AG04450 (cell line): ENCODE measurements at regions of chr5 and their contacts with region 1.

Region 1: GRCh38 chr5:149852641-149853330 is 91.8 kb downstream of the PDE6A start:
- DNase-seq: peak; percentile 46
- H3K4me3 ChIP-seq: no peak overlapping the region
- H3K27ac ChIP-seq: no peak overlapping the region
- H3K27me3 ChIP-seq: peaks cover 19% of the 10 kb centered on the region
- CTCF ChIP-seq: peak; percentile 95

Region 2: DNA sequence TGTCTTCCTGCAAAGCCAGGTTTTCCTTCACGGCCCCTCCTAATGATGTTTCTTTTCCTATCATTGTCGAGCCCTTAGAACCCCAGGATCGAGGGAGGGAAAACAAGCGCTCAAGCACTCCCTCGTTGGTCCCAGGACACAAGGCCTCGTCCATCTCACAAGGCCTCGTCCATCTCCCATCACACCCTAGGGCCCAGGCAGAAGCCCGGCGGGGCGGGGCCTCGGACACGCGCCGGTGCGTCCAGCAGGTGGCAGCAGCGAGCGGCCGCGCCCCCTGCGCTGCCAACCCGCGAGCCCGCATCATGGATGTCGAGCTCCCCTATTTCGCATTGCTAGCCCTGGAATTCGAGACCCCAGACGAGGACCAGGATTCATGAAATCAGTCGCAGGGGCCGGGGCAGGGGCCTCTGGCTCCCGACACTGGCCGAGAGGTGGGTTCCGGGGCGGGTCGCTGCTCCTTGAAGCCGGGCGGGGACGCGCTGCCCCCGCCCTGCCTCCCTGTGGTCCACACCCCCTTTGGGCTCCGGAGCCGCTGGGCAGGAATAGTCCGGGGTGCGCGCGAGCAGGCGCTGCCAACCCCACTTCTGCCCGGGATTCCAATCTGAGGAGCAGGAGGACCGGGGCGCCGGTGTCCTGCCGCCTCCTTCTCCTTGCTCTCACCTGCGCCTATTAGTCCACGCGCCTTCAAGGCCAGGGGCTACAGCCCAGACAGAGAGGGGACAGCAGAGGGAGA is 711.4 kb before region 1 on chr5 and contains the start of gene ABLIM3:
- CTCF ChIA-PET with region 1: no interaction called
- POLR2A ChIA-PET with region 1: no interaction called
- DNase-seq: no peak
- H3K4me3 ChIP-seq: peak within 1 kb of the TSS; percentile 94
- H3K27ac ChIP-seq: peak within 1 kb of the TSS; percentile 69
- H3K27me3 ChIP-seq: no peaks in the 10 kb centered on the region
- CTCF ChIP-seq: peak; percentile 76
- polyA plus RNA-seq, gene ABLIM3: 52.6 and 60.6 TPM in 2 replicates

Region 3: GRCh38 chr5:149828161-149828884 is 24.5 kb before region 1 on chr5:
- CTCF ChIA-PET with region 1: interaction called, 325 read pairs
- POLR2A ChIA-PET with region 1: no interaction called
- DNase-seq: peak; percentile 85
- H3K4me3 ChIP-seq: no peak overlapping the region
- H3K27ac ChIP-seq: no peak overlapping the region
- H3K27me3 ChIP-seq: no peaks in the 10 kb centered on the region
- CTCF ChIP-seq: peak; percentile 89

Region 4: DNA sequence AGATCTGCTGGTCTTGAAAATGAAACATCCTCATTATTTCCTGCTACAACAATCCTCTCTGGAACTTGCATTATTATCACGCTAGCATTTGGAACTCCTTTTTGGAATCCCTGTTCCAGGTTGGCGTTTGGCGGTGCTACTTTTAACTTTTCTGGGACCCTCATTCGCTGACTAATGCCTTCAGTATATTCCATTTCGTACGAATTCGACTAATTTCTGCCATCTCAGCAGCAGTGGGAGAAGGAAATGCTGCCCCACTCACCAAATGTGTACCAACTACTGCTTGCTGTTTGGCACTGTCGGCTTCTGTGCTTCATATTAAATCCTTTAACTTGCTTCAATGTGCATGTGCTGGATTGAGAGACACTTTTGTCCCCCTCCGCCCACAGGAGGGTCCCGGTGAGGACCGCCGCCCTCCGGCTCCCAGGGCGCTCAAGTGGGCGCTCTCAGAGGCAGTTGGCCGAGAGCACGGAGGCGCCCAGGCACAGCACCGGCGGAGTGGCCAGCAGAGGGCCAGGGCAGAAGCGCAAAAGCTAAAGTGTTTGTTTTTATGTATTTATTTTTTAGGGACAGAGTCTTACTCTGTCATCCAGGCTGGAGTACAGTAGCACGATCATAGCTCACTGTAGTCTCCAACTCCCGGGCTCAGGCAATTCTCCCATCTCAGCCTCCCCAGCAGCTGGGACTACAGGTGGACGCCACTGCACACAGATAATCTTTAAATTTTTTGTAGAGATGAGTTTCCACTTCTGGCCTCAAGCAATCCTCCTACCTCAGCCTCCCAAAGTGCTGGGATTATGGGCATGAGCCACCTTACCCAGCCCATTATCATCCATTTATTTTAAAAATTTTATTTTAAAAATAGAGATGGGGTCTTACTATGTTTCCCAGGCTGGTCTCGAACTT is 79.9 kb after region 1 on chr5:
- CTCF ChIA-PET with region 1: interaction called, 19 read pairs
- POLR2A ChIA-PET with region 1: no interaction called
- DNase-seq: no peak
- H3K4me3 ChIP-seq: no peak overlapping the region
- H3K27ac ChIP-seq: no peak overlapping the region
- H3K27me3 ChIP-seq: peaks cover 3% of the 10 kb centered on the region
- CTCF ChIP-seq: peak; percentile 45

Region 5: GRCh38 chr5:149979896-149980295 is 127.1 kb after region 1 on chr5:
- CTCF ChIA-PET with region 1: interaction called, 13 read pairs
- POLR2A ChIA-PET with region 1: no interaction called
- DNase-seq: no peak
- H3K4me3 ChIP-seq: no peak overlapping the region
- H3K27ac ChIP-seq: no peak overlapping the region
- H3K27me3 ChIP-seq: no peaks in the 10 kb centered on the region
- CTCF ChIP-seq: no peak

Region 6: GRCh38 chr5:150006318-150006717 is 153.5 kb after region 1 on chr5:
- CTCF ChIA-PET with region 1: interaction called, 10 read pairs
- POLR2A ChIA-PET with region 1: no interaction called
- DNase-seq: no peak
- H3K4me3 ChIP-seq: no peak overlapping the region
- H3K27ac ChIP-seq: no peak overlapping the region
- H3K27me3 ChIP-seq: no peaks in the 10 kb centered on the region
- CTCF ChIP-seq: no peak